ENCODE measurements at regions of chr5 and their contacts with region 1.

Region 1: DNA sequence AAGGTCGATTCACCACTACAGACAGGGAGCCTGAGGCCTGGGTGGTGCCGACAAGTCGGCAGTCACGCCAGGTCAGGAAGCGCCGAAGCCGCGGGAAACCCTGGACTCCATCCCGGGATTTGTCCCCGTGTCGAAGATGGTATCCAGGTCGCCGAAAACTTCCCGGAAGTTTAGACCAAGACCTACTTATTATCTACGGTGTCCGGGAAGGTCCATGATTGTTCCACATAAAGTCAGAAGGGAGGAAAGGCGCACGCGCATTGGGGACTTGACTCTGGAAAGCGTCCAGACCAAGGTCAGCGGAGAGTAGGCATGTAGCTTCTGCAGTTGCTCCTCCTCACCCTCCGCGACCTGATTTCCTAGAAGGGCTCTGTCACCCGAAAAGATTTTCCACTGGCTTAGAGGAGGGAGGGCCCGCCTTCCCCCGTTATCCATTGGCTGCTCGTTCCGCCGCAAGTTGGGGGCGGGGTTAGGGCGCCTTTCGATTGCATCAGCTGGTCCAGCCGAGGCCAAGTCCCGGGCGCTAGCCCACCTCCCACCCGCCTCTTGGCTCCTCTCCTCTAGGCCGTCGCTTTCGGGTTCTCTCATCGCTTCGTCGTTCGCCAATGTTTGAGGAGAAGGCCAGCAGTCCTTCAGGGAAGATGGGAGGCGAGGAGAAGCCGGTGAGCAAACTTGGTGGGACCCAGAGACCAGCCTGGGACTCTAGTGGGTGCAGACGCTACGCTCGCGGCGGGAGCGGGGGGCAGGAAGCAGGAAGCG is at the start of gene TARS1:
- DNase-seq: peak; percentile 100
- ATAC-seq: peak; percentile 94
- H3K4me3 ChIP-seq: peak within 1 kb of the TSS; percentile 91 to 98 (median 96)
- H3K27ac ChIP-seq: peak within 1 kb of the TSS; percentile 88
- H3K4me1 ChIP-seq: peaks cover 40% of the 10 kb centered on the region
- H3K27me3 ChIP-seq: no peaks in the 10 kb centered on the region; a peak in 1 of 5 replicates
- CTCF ChIP-seq: no peak
- EP300 ChIP-seq: 0 out of 4 replicates have a peak, but pooled peaks have one; percentile 37 to 47
- POLR2A ChIP-seq: peak; percentile 83 to 86
- RAD21 ChIP-seq: peak; percentile 40; the same call in 1 of the 2 replicates
- total RNA-seq, gene TARS1: 184 and 297 TPM in 2 replicates

Region 2: GRCh38 chr5:33401482-33402390 is 38.9 kb before region 1 on chr5:
- CTCF ChIA-PET with region 1: no interaction called
- POLR2A ChIA-PET with region 1: no interaction called
- in situ Hi-C with region 1: no loop called
- intact Hi-C with region 1: no loop called
- DNase-seq: no peak
- ATAC-seq: no peak
- H3K4me3 ChIP-seq: no peak overlapping the region
- H3K27ac ChIP-seq: no peak overlapping the region
- H3K4me1 ChIP-seq: no peaks in the 10 kb centered on the region
- H3K27me3 ChIP-seq: no peaks in the 10 kb centered on the region
- CTCF ChIP-seq: no peak
- EP300 ChIP-seq: no peak
- POLR2A ChIP-seq: no peak
- RAD21 ChIP-seq: no peak

Region 3: DNA sequence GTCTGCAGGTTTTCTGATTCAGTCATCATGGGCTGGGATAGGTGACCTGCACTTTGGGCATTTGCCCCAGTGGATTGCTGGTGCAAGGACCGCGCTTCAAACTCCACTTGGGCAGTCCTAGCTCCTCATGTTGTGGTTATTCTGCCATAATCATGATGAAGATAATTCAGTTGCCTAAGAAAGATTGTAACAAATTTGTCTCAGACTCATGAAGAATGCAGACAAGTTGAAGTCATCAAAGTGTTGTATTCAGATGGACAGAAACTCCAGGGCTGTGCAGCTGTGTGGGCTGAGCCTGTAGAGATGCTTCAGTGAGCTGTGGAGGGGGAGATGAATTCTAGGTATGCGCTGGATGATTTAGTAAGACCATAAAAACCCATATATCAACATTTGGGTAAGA is 38.6 kb after region 1 on chr5:
- CTCF ChIA-PET with region 1: no interaction called
- POLR2A ChIA-PET with region 1: no interaction called
- in situ Hi-C with region 1: no loop called
- intact Hi-C with region 1: loop called (anchors 5 kb)
- DNase-seq: no peak
- ATAC-seq: no peak
- H3K4me3 ChIP-seq: no peak overlapping the region
- H3K27ac ChIP-seq: no peak overlapping the region
- H3K4me1 ChIP-seq: no peaks in the 10 kb centered on the region
- H3K27me3 ChIP-seq: no peaks in the 10 kb centered on the region
- CTCF ChIP-seq: no peak
- EP300 ChIP-seq: no peak
- POLR2A ChIP-seq: no peak
- RAD21 ChIP-seq: no peak

Region 4: DNA sequence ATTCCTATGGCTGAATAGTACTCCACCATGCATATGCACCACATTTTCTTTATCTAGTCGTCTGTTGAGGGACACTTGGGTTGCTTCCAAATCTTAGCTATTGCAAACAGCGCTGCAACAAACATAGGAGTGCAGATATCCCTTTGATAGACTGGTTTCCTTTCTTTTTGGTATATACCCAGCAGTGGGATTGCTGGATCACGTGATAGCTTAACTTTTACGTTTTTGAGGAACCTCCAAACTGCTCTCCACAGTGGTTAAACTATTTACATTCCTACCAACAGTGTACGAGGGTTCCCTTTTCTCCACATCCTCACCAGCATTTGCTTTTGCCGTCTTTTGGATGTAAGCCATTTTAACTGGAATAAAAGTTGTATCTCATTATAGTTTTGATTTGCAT is 142.7 kb after region 1 on chr5:
- CTCF ChIA-PET with region 1: no interaction called
- POLR2A ChIA-PET with region 1: no interaction called
- in situ Hi-C with region 1: no loop called
- intact Hi-C with region 1: loop called (anchors 2 kb)
- DNase-seq: no peak
- ATAC-seq: no peak
- H3K4me3 ChIP-seq: no peak overlapping the region; a peak in 1 of 6 replicates
- H3K27ac ChIP-seq: no peak overlapping the region
- H3K4me1 ChIP-seq: peaks cover 25% of the 10 kb centered on the region
- H3K27me3 ChIP-seq: no peaks in the 10 kb centered on the region
- CTCF ChIP-seq: no peak
- EP300 ChIP-seq: no peak
- POLR2A ChIP-seq: no peak
- RAD21 ChIP-seq: no peak

Region 5: DNA sequence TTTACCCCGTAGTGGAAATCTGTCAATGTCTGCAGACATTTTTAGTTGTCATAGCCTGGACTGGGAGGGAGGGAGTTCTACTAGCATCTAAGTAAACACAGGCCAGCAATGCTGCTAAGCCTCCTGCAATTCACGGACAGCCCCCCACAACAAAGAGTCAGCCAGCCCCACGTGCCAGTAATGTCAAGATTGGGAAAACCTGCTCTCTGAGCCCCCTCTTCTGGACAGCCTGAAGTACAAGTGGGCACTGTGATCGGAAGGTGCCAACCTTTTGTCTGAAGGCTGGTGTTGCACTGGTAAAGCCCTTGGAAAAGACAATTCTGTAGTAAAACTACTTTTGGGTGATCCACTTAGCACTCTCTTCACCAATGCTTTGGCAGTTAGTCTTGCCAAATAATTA is 154.6 kb after region 1 on chr5:
- CTCF ChIA-PET with region 1: interaction called, 8 read pairs
- POLR2A ChIA-PET with region 1: no interaction called
- in situ Hi-C with region 1: no loop called
- intact Hi-C with region 1: loop called (anchors 1 kb)
- DNase-seq: no peak
- ATAC-seq: peak; percentile 55
- H3K4me3 ChIP-seq: no peak overlapping the region
- H3K27ac ChIP-seq: no peak overlapping the region
- H3K4me1 ChIP-seq: no peaks in the 10 kb centered on the region
- H3K27me3 ChIP-seq: no peaks in the 10 kb centered on the region
- CTCF ChIP-seq: peak; percentile 67
- EP300 ChIP-seq: no peak
- POLR2A ChIP-seq: no peak
- RAD21 ChIP-seq: no peak

Region 6: DNA sequence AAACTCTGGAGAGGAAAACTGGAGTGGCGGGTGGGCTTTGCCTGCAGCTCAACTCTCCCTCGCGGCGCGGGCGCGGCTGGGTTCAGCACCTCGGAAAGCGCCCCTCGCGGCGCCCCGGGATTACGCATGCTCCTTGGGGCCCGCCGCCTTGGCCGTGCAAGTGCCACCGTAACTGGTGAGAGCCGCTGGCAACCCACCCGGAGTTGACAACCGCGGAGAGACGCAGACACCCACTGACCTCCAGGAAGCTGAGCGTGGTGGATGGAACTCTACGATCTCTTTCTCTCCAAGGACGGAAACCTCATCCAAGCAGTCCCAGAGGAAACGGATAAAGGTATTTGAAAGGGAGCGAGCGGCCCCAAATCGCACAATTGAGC is 495.3 kb after region 1 on chr5:
- CTCF ChIA-PET with region 1: interaction called, 8 read pairs
- POLR2A ChIA-PET with region 1: interaction called, 4 read pairs
- in situ Hi-C with region 1: loop called (anchors 5 kb)
- intact Hi-C with region 1: no loop called
- DNase-seq: no peak
- ATAC-seq: peak; percentile 86
- H3K4me3 ChIP-seq: no peak overlapping the region
- H3K27ac ChIP-seq: no peak overlapping the region
- H3K4me1 ChIP-seq: no peaks in the 10 kb centered on the region
- H3K27me3 ChIP-seq: peaks cover 3 to 10% of the 10 kb centered on the region in 2 experiments; a peak in 3 of 5 replicates
- CTCF ChIP-seq: 0 out of 2 replicates have a peak, but pooled peaks have one; percentile 10
- EP300 ChIP-seq: no peak
- POLR2A ChIP-seq: no peak
- RAD21 ChIP-seq: no peak

Measured in HepG2 (cell line).